ENCODE measurements at regions of chr12 and their contacts with region 1.

Region 1: DNA sequence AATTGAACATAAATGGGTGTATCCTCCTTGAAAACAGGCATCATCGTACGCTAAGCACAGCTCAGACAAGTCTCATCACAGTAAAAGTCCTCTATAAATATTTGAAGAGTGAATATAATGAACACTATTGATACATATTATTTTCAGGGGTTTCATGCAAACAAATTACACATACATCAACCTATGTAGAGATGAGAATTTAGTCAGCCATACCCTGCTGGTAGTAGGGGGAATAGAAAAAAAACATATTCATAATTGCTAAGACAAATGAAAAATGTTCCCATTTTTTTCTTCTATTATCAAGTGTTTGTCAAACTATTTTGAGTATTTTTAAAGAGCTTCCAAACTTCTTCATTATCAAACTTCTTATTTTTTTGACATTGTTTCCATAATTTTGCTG is 205.6 kb upstream of the SOX5 start:
- DNase-seq: no peak
- H3K4me3 ChIP-seq: no peak overlapping the region
- H3K27ac ChIP-seq: no peak overlapping the region
- H3K4me1 ChIP-seq: no peaks in the 10 kb centered on the region
- H3K27me3 ChIP-seq: no peaks in the 10 kb centered on the region
- CTCF ChIP-seq: no peak
- POLR2A ChIP-seq: no peak

Region 2: GRCh38 chr12:24088751-24089509 is 66.1 kb before region 1 on chr12:
- intact Hi-C with region 1: no loop called
- DNase-seq: no peak
- H3K4me3 ChIP-seq: no peak overlapping the region
- H3K27ac ChIP-seq: no peak overlapping the region
- H3K4me1 ChIP-seq: no peaks in the 10 kb centered on the region
- H3K27me3 ChIP-seq: no peaks in the 10 kb centered on the region
- CTCF ChIP-seq: no peak
- POLR2A ChIP-seq: no peak

Region 3: DNA sequence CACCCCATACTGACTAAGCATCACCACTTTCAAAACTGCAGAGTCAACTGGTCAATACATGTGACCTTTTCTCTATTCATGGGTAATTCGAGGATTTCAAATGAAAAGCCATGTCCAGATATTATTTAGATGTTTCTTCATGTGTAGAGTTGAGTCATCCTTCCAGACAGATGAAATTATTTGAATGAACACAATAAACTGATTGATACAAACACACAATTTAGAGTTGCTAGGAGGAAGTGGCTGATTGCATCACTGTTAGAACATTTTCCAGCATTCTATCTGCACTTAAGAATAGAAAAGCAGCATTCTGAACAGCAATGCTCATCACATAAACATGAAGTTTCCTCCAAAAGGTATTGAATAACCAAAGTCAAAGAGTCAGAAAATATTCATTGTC is 67.9 kb after region 1 on chr12:
- intact Hi-C with region 1: loop called (anchors 2 kb)
- DNase-seq: no peak
- H3K4me3 ChIP-seq: no peak overlapping the region
- H3K27ac ChIP-seq: peak overlapping the region in 1 of 2 donors; percentile 30
- H3K4me1 ChIP-seq: no peaks in the 10 kb centered on the region
- H3K27me3 ChIP-seq: no peaks in the 10 kb centered on the region
- CTCF ChIP-seq: no peak
- POLR2A ChIP-seq: no peak

Measured in breast epithelium (tissue), 4 donors.